Transverse colon (tissue), 4 donors: ENCODE measurements at regions of chr18 and their contacts with region 1.

Region 1: GRCh38 chr18:27136208-27136535 is 48.9 kb downstream of the CHST9 start:
- DNase-seq: no peak
- H3K4me3 ChIP-seq: no peak overlapping the region
- H3K27ac ChIP-seq: no peak overlapping the region
- H3K4me1 ChIP-seq: no peaks in the 10 kb centered on the region
- H3K27me3 ChIP-seq: no peaks in the 10 kb centered on the region
- CTCF ChIP-seq: no peak
- EP300 ChIP-seq: no peak
- POLR2A ChIP-seq: no peak

Region 2: GRCh38 chr18:27022463-27022862 is 113.7 kb before region 1 on chr18:
- in situ Hi-C with region 1: loop called in 1 of 4 experiments (anchors 10 kb)
- intact Hi-C with region 1: no loop called
- DNase-seq: no peak
- H3K4me3 ChIP-seq: no peak overlapping the region
- H3K27ac ChIP-seq: no peak overlapping the region
- H3K4me1 ChIP-seq: no peaks in the 10 kb centered on the region
- H3K27me3 ChIP-seq: no peaks in the 10 kb centered on the region
- CTCF ChIP-seq: no peak
- EP300 ChIP-seq: no peak
- POLR2A ChIP-seq: no peak

Region 3: DNA sequence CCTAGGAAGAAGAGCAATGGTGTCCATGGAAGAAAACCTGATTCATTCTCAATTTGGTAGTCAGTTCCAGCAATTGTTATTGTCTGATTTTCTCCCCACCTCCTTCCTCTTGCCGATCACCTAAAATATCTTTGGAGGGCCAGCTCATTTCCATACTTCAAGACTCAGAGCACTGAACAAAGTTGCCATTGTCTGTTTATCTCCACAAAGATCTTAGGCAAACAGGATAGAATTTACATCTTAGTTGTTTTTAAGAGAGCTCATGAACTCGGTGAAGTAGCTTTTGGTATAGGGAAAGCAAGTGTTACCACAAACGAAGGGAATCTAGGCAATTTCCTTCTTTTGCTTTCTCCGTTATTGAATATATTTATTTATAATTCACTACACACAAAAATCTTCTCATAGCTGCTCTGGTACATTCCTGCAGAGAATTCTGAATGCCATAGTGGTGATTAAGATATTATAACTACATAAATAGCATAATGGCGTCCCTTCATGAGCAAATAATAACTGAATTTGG is 90.4 kb after region 1 on chr18:
- in situ Hi-C with region 1: loop called in 2 of 4 experiments (anchors 25 kb)
- intact Hi-C with region 1: no loop called
- DNase-seq: no peak
- H3K4me3 ChIP-seq: no peak overlapping the region
- H3K27ac ChIP-seq: no peak overlapping the region
- H3K4me1 ChIP-seq: no peaks in the 10 kb centered on the region
- H3K27me3 ChIP-seq: no peaks in the 10 kb centered on the region
- CTCF ChIP-seq: no peak
- EP300 ChIP-seq: no peak
- POLR2A ChIP-seq: no peak